MCF 10A (cell line): ENCODE measurements at regions of chr4 and their contacts with region 1.

Region 1: DNA sequence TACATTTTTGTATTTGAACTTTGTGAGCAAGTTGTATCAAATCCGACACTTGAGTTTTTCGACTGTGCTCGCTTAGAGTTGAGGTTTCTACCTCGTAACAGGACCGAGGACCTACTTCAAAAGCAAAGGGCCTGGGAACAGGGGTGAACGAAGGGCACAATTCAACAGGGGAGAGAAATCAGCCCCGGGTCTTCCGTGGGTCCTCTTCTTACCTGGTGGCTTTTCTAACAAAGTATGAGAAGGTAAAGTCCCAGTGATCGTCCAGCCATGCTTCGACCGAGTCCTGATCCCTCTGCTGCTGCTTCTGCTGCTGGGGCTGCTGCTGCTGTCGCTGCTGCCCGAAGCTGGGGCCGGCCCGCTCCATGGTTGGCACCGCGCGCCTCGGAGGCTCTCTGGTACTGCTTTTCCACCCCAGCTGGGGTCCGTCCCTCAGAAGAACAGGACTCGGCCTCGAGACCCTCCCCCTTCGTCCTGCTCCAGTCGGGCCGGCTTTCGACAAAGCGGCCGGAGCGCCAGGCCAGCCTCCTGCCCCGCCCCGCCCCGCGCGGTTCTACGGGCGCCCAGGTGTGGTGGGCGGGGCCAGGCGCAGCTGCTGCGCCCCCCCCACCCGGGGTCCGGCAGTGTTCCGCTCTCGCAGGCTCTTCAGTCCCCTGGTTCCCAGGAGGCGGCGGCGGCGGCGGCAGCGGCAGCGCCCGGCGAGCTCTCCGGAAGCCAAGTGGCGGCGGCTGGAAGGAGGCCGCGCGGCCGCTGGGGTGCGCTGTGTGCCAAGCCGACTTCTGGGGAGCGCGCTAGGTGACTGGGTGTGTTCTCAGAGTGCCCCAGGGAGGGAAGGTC is at the start of gene PDE5A:
- DNase-seq: peak; percentile 84
- H3K4me3 Mint-ChIP-seq: peak within 1 kb of the TSS; percentile 96
- H3K27ac Mint-ChIP-seq: peak within 1 kb of the TSS; percentile 61
- H3K4me1 Mint-ChIP-seq: peaks cover 15% of the 10 kb centered on the region
- H3K27me3 Mint-ChIP-seq: no peaks in the 10 kb centered on the region
- CTCF ChIP-seq: peak; percentile 78
- total RNA-seq, gene PDE5A: 0.71 and 0.89 TPM in 2 replicates

Region 2: DNA sequence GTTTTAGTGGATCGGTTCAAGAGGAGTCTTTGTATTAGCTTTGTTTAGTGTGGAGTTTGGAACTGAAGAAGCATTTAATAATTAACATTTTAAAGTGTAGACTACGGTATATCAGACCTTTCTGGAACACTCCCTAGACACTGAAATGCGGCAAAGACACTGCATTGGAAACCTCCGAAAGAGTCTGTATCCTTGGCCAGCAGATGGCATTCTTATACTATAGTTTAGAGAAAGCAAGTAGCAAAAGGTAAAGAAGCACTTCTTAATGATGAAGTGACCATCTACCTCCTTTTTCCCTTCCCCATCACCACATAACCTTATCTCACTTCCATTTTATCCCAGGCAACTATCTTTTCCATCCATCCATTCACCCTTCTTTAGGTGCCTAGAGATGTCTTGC is 314.2 kb before region 1 on chr4:
- CTCF ChIA-PET with region 1: interaction called, 27 read pairs
- POLR2A ChIA-PET with region 1: no interaction called
- intact Hi-C with region 1: loop called (anchors 1 kb)
- DNase-seq: peak; percentile 61
- H3K4me3 Mint-ChIP-seq: no peak overlapping the region
- H3K27ac Mint-ChIP-seq: no peak overlapping the region
- H3K4me1 Mint-ChIP-seq: no peaks in the 10 kb centered on the region
- H3K27me3 Mint-ChIP-seq: peaks cover 22% of the 10 kb centered on the region
- CTCF ChIP-seq: peak; percentile 49

Region 3: GRCh38 chr4:119559044-119559647 is 69.4 kb before region 1 on chr4:
- CTCF ChIA-PET with region 1: interaction called, 56 read pairs
- POLR2A ChIA-PET with region 1: interaction called, 6 read pairs
- intact Hi-C with region 1: loop called (anchors 1 kb)
- DNase-seq: peak; percentile 56
- H3K4me3 Mint-ChIP-seq: no peak overlapping the region
- H3K27ac Mint-ChIP-seq: no peak overlapping the region
- H3K4me1 Mint-ChIP-seq: no peaks in the 10 kb centered on the region
- H3K27me3 Mint-ChIP-seq: no peaks in the 10 kb centered on the region
- CTCF ChIP-seq: peak; percentile 43

Region 4: DNA sequence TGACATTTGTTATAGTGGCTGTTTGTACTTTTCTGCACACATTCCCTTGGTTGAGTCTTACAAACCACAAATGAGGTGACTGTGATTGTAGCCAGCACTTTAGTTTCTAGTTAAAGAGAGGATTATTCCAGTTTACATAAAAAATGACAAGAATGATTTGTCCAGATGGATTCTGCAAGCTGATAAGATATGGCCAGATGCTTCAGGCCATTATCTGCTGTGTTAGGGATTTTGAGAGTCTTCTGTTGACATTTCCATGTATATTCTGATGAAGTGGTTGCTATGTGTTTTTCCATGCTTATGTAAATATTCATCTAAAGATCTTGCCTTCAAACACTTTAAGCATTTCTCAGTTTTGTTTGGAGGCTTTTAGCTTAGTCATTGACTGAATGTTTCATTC is 31.1 kb after region 1 on chr4:
- CTCF ChIA-PET with region 1: interaction called, 11 read pairs
- POLR2A ChIA-PET with region 1: no interaction called
- intact Hi-C with region 1: no loop called
- DNase-seq: no peak
- H3K4me3 Mint-ChIP-seq: no peak overlapping the region
- H3K27ac Mint-ChIP-seq: no peak overlapping the region
- H3K4me1 Mint-ChIP-seq: no peaks in the 10 kb centered on the region
- H3K27me3 Mint-ChIP-seq: no peaks in the 10 kb centered on the region
- CTCF ChIP-seq: no peak

Region 5: GRCh38 chr4:120007191-120007871 is 378.8 kb after region 1 on chr4:
- CTCF ChIA-PET with region 1: interaction called, 13 read pairs
- POLR2A ChIA-PET with region 1: no interaction called
- intact Hi-C with region 1: no loop called
- DNase-seq: peak; percentile 67
- H3K4me3 Mint-ChIP-seq: no peak overlapping the region
- H3K27ac Mint-ChIP-seq: no peak overlapping the region
- H3K4me1 Mint-ChIP-seq: no peaks in the 10 kb centered on the region
- H3K27me3 Mint-ChIP-seq: no peaks in the 10 kb centered on the region
- CTCF ChIP-seq: no peak

Region 6: DNA sequence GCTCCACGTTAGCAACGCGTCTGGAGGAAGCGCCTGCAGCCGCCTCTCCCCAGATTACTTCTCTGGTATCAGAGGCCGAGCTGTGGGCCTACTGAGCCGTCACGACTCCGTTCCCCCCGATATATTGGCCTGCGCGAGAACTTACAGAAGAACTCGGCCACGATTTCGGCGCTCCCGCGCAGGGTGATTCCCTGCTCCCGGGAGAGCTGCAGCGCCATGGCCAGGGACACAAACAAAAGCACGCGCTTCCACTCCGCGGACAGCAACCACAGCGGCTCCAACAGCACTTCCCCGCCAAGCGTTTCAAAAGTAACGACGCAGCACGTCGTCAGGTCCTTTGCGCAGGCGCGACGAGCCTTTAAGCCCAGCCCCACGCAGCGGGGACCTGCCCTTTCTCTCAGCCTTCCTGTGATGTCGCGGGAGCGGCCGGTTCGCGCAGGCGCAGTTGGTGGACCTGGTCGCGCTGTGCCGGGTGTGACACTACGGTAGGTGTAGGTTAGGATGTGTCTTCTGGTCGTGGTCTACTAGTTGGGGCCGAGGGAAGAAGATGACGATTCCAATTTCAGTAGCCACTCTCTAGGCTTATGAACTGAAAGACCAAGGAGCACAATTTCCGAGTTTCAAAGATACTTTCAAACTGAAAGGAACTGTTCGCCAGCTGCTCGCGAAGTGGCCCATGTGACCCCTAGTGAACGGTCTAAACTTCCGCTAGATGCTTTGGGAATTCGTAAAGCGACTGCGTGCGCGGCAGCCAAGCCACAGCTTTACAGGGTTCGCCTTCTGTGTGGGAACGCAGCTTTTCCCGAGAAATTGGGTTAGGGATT is 438.2 kb after region 1 on chr4 and contains the start of gene MAD2L1:
- CTCF ChIA-PET with region 1: interaction called, 20 read pairs
- POLR2A ChIA-PET with region 1: interaction called, 3 read pairs
- intact Hi-C with region 1: no loop called
- DNase-seq: peak; percentile 99
- H3K4me3 Mint-ChIP-seq: peak within 1 kb of the TSS; percentile 94
- H3K27ac Mint-ChIP-seq: peak within 1 kb of the TSS; percentile 96
- H3K4me1 Mint-ChIP-seq: peaks cover 53% of the 10 kb centered on the region
- H3K27me3 Mint-ChIP-seq: no peaks in the 10 kb centered on the region
- CTCF ChIP-seq: no peak
- total RNA-seq, gene MAD2L1: 16.2 and 26.8 TPM in 2 replicates